ENCODE measurements at regions of chr7 and their contacts with region 1.

Region 1: GRCh38 chr7:83005410-83005809 is 157.3 kb downstream of the PCLO start:
- DNase-seq: peak; percentile 60
- ATAC-seq: peak; percentile 39; the same call in 1 of the 2 replicates
- H3K4me3 ChIP-seq: no peak overlapping the region
- H3K27ac ChIP-seq: no peak overlapping the region
- H3K4me1 ChIP-seq: peaks cover 19% of the 10 kb centered on the region
- H3K27me3 ChIP-seq: no peaks in the 10 kb centered on the region
- CTCF ChIP-seq: peak; percentile 58

Region 2: DNA sequence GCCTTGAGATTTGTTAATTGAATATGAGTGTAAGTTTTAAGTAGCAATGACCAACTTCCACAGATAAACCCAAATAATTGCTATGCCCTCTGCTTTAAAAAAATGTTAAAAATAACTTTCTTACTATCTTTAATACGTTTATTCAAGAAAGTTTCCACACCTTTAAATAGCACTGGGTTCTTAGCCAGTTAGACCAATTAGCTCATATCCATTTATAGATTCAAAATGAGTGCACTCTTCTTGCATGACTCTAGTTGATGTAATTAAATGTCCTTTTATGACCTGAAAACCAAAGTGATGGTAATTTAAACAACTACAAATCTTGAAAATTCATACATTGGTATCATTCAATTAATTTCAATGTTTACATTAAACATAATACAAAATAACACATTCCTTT is 511.0 kb before region 1 on chr7:
- CTCF ChIA-PET with region 1: no interaction called
- POLR2A ChIA-PET with region 1: no interaction called
- intact Hi-C with region 1: no loop called
- DNase-seq: no peak
- ATAC-seq: no peak
- H3K4me3 ChIP-seq: no peak overlapping the region
- H3K27ac ChIP-seq: no peak overlapping the region
- H3K4me1 ChIP-seq: no peaks in the 10 kb centered on the region
- H3K27me3 ChIP-seq: peaks cover 11% of the 10 kb centered on the region
- CTCF ChIP-seq: no peak

Region 3: DNA sequence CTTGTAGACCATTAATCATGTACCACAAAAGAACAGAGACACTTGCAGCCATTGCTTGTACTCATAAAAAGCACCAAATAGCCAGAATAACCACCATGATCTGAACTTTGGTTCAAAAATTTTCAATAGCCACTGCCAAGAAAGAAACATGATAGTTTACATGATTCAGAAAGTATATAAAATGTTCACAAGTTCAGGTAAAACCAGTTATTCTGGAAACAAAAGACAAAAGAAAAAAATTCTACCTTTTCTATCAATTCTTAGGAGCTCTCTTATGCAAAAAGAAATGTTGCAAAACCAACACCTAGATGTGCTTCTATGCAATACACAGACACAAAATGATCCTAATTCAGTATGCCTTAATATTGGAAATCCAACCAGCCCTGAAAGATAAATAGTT is 48.6 kb after region 1 on chr7:
- CTCF ChIA-PET with region 1: no interaction called
- POLR2A ChIA-PET with region 1: no interaction called
- intact Hi-C with region 1: loop called (anchors 5 kb)
- DNase-seq: peak; percentile 89
- ATAC-seq: peak; percentile 62
- H3K4me3 ChIP-seq: peak overlapping the region; percentile 57
- H3K27ac ChIP-seq: peak overlapping the region; percentile 84
- H3K4me1 ChIP-seq: peaks cover 34% of the 10 kb centered on the region
- H3K27me3 ChIP-seq: no peaks in the 10 kb centered on the region
- CTCF ChIP-seq: no peak

Region 4: DNA sequence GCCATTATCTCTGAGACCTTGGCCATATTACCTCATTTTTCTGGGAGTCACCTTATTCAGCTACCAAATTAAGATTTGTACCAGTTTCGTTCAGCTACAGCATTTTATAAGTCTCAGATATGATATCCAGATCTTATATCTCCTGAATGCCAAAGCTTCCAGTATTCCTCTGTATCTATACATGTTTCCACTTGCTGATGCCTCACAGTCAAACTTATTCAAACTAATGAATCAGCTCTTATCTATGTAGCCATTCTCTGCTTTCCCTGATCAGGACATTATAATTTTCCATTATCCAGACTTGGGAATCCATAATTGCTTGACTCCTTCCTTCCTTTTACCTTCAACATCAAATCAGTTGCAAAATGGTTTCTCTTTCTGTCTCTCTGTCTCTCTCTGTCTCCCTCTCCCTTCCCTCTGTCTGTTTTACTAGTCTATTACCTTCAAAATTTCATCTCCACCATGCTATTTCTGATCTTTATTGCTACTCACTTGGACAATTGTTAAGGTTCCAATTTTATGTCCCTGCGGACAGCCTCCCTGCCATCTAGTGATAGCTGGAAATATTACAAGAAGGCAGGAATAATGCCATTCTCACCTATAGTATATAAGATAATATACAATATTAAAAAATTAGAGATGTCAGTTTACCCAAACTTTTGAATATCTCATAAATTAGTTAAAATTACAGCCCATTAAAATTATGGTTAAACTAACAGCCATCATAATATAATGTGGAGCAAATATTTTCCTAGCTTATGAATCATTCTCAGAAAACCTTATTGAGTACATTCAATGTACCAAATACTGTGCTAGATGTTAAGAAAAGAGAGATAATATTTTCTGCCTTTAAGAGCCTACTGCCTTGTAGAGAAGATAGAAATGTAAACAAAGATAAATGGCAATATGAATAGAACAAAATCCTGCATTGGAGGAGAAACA is 67.4 kb after region 1 on chr7:
- CTCF ChIA-PET with region 1: no interaction called
- POLR2A ChIA-PET with region 1: no interaction called
- intact Hi-C with region 1: loop called (anchors 1 kb)
- DNase-seq: peak; percentile 55
- ATAC-seq: peak; percentile 71
- H3K4me3 ChIP-seq: no peak overlapping the region
- H3K27ac ChIP-seq: no peak overlapping the region
- H3K4me1 ChIP-seq: no peaks in the 10 kb centered on the region
- H3K27me3 ChIP-seq: no peaks in the 10 kb centered on the region
- CTCF ChIP-seq: peak; percentile 69

Region 5: GRCh38 chr7:83119026-83119382 is 113.6 kb after region 1 on chr7:
- CTCF ChIA-PET with region 1: no interaction called
- POLR2A ChIA-PET with region 1: no interaction called
- intact Hi-C with region 1: no loop called
- DNase-seq: no peak
- ATAC-seq: peak; percentile 22; the same call in 1 of the 2 replicates
- H3K4me3 ChIP-seq: no peak overlapping the region
- H3K27ac ChIP-seq: no peak overlapping the region
- H3K4me1 ChIP-seq: no peaks in the 10 kb centered on the region
- H3K27me3 ChIP-seq: no peaks in the 10 kb centered on the region
- CTCF ChIP-seq: no peak

Region 6: GRCh38 chr7:83148776-83149175 is 143.4 kb after region 1 on chr7:
- CTCF ChIA-PET with region 1: no interaction called
- POLR2A ChIA-PET with region 1: no interaction called
- intact Hi-C with region 1: loop called (anchors 5 kb)
- DNase-seq: peak; percentile 71
- ATAC-seq: peak; percentile 84
- H3K4me3 ChIP-seq: no peak overlapping the region
- H3K27ac ChIP-seq: peak overlapping the region; percentile 65
- H3K4me1 ChIP-seq: peaks cover 30% of the 10 kb centered on the region
- H3K27me3 ChIP-seq: no peaks in the 10 kb centered on the region
- CTCF ChIP-seq: no peak